ENCODE measurements at regions of chr6 and their contacts with region 1.

Region 1: GRCh38 chr6:139881728-139882211 is 507.3 kb upstream of the CITED2 start:
- DNase-seq: peak; percentile 30
- H3K4me3 ChIP-seq: no peak overlapping the region
- H3K27ac ChIP-seq: no peak overlapping the region
- H3K4me1 ChIP-seq: peaks cover 9% of the 10 kb centered on the region
- H3K27me3 ChIP-seq: no peaks in the 10 kb centered on the region
- CTCF ChIP-seq: peak; percentile 70 to 73

Region 2: GRCh38 chr6:140441256-140441655 is 559.5 kb after region 1 on chr6:
- CTCF ChIA-PET with region 1: no interaction called
- dilution Hi-C with region 1: no loop called
- in situ Hi-C with region 1: loop called in 1 of 2 experiments (anchors 10 kb)
- intact Hi-C with region 1: loop called (anchors 1 kb)
- DNase-seq: peak; percentile 28
- H3K4me3 ChIP-seq: no peak overlapping the region
- H3K27ac ChIP-seq: no peak overlapping the region
- H3K4me1 ChIP-seq: peaks cover 18% of the 10 kb centered on the region
- H3K27me3 ChIP-seq: no peaks in the 10 kb centered on the region
- CTCF ChIP-seq: peak; percentile 43 to 78